Naive thymus-derived CD4-positive, alpha-beta T cell (primary cell): ENCODE measurements at regions of chr3 and their contacts with region 1.

Region 1: GRCh38 chr3:53303957-53304356 is 43.4 kb downstream of the DCP1A start:
- DNase-seq: no peak
- ATAC-seq: no peak
- H3K4me3 ChIP-seq: no peak overlapping the region
- H3K4me3 Mint-ChIP-seq: no peak overlapping the region
- H3K27ac ChIP-seq: no peak overlapping the region
- H3K27ac Mint-ChIP-seq: peak overlapping the region in 3 of 9 donors; percentile 16 to 74 (median 27)
- H3K4me1 ChIP-seq: no peaks in the 10 kb centered on the region
- H3K4me1 Mint-ChIP-seq: peaks cover 0 to 5% (median 0%) of the 10 kb centered on the region in 7 donors
- H3K27me3 ChIP-seq: no peaks in the 10 kb centered on the region
- H3K27me3 Mint-ChIP-seq: no peaks in the 10 kb centered on the region

Region 2: GRCh38 chr3:53219895-53220483 is 84.0 kb before region 1 on chr3:
- CTCF ChIA-PET with region 1: no interaction called
- POLR2A ChIA-PET with region 1: no interaction called
- intact Hi-C with region 1: loop called in 1 of 2 experiments (anchors 1 kb)
- DNase-seq: peak; percentile 39 to 83 (median 66)
- ATAC-seq: peak; percentile 91
- H3K4me3 ChIP-seq: no peak overlapping the region
- H3K4me3 Mint-ChIP-seq: no peak overlapping the region
- H3K27ac ChIP-seq: no peak overlapping the region
- H3K27ac Mint-ChIP-seq: peak overlapping the region in 3 of 9 donors; percentile 7 to 19 (median 13)
- H3K4me1 ChIP-seq: no peaks in the 10 kb centered on the region
- H3K4me1 Mint-ChIP-seq: peaks cover 0 to 5% (median 3%) of the 10 kb centered on the region in 7 donors
- H3K27me3 ChIP-seq: no peaks in the 10 kb centered on the region
- H3K27me3 Mint-ChIP-seq: peaks cover 0 to 5% (median 0%) of the 10 kb centered on the region in 5 donors